Left colon (tissue), 2 donors: ENCODE measurements at regions of chr4 and their contacts with region 1.

Region 1: GRCh38 chr4:124262211-124263179 is 450.0 kb downstream of the ANKRD50 start:
- DNase-seq: peak; percentile 25 to 41
- ATAC-seq: peak; percentile 82

Region 2: DNA sequence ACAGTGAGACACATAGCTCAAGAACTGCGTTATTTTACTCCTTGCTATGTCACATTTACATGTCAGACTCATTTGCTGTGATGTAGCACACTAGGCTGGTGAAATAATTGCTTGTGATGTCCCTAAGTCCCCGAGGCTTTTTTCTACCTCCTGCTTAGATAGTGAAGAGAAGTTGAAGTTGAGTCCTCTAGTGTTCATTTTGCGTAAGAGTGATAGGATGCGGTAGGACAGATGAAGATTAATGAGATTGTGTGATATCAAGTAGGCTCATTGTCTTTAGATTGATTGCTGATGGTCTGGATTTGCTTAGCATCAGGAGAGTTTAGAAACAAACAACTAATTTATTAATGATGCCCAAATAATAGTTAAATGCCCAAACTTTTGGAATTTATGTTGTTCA is 1166.5 kb before region 1 on chr4:
- intact Hi-C with region 1: loop called in 1 of 2 experiments (anchors 10 kb)
- DNase-seq: no peak
- ATAC-seq: no peak

Region 3: GRCh38 chr4:123380728-123381716 is 881.5 kb before region 1 on chr4:
- intact Hi-C with region 1: loop called in 1 of 2 experiments (anchors 10 kb)
- DNase-seq: no peak
- ATAC-seq: no peak

Region 4: DNA sequence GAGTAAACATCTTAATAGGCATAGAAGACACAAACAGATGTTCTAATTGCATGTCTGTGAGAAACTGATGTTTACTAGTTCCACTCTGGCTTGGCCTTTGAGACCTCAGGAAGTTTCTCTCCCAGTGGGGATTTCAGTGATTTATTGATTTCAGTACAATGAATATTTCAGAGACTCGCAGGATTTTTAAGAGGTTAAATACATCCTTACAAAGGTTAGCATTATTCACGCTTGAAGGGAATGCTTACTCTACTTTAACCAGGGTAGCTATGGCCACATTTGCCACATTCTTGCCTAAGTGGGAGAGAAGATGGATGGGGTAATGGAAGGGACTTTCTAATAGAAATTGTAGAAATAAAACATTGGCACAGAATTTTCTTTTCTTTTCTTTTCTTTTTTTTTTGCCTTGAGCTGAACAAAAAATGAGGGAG is 385.8 kb before region 1 on chr4:
- intact Hi-C with region 1: no loop called
- DNase-seq: no peak
- ATAC-seq: no peak